BJ (cell line): ENCODE measurements at regions of chr4 and their contacts with region 1.

Region 1: GRCh38 chr4:40309250-40309774 is 25.8 kb upstream of the CHRNA9 start:
- DNase-seq: no peak
- H3K4me3 ChIP-seq: no peak overlapping the region
- H3K27me3 ChIP-seq: no peaks in the 10 kb centered on the region; the same call in 1 of the 2 replicates
- CTCF ChIP-seq: peak; percentile 92

Region 2: GRCh38 chr4:40152637-40153036 is 156.7 kb before region 1 on chr4:
- CTCF ChIA-PET with region 1: interaction called, 12 read pairs
- POLR2A ChIA-PET with region 1: no interaction called
- DNase-seq: no peak
- H3K4me3 ChIP-seq: no peak overlapping the region
- H3K27me3 ChIP-seq: no peaks in the 10 kb centered on the region
- CTCF ChIP-seq: no peak

Region 3: DNA sequence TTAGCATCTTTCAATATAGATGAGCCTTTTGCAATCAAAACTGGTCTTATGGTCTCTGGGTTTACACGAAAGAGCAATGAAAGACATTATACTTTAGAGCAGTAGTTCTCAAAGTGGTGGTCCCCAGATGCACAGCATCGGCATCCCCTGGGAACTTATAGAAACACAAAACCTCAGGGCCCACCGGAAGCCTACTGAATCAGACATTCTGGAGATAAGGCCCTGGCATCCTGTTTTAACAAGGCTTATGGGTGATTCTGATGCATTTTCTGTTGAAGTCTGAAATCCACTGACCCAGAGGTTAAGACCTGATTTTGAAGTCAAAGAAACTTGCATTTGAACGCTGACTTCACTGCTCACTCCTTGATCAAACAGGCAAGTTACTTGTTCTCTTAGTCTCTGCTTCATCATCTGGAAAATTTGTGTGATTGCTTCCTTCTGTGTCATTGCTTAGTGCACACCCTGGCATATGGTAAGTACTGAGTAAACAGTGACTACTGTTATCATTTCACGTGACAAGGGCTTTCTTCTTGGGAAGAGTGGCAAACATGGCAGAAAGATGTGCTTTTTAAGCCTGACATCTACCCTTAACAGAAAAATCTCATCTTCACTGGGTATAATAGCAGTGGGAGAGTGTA is 40.4 kb after region 1 on chr4:
- CTCF ChIA-PET with region 1: no interaction called
- POLR2A ChIA-PET with region 1: no interaction called
- DNase-seq: no peak
- H3K4me3 ChIP-seq: no peak overlapping the region
- H3K27me3 ChIP-seq: no peaks in the 10 kb centered on the region; the same call in 1 of the 2 replicates
- CTCF ChIP-seq: no peak